ENCODE measurements at regions of chr5 and their contacts with region 1.

Region 1: GRCh38 chr5:111183064-111183463 is 41.1 kb upstream of the CAMK4 start:
- DNase-seq: no peak
- ATAC-seq: no peak
- H3K4me3 ChIP-seq: no peak overlapping the region
- H3K27ac ChIP-seq: no peak overlapping the region
- H3K4me1 ChIP-seq: no peaks in the 10 kb centered on the region
- H3K27me3 ChIP-seq: no peaks in the 10 kb centered on the region
- CTCF ChIP-seq: no peak
- POLR2A ChIP-seq: no peak
- RAD21 ChIP-seq: no peak

Region 2: DNA sequence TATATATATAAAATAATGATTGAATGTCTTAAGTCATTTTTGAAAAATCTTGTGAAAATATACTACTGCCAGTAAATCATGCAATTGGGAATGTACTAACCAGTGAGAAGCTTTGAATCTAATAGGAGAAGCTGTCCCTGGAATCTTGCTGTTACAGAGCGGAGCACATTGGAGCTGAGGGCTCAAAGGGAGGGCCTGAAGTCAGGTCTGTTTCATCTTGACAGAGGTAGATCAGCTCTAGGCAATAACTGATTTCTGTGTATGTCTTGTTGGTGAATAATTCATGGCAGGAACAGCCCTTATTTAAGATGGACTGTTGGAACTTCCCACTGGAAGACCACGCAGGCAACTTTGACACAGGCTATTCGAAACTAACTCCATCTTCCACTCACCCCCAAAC is 58.6 kb after region 1 on chr5:
- CTCF ChIA-PET with region 1: no interaction called
- POLR2A ChIA-PET with region 1: no interaction called
- RAD21 ChIA-PET with region 1: no interaction called
- intact Hi-C with region 1: loop called (anchors 2 kb)
- DNase-seq: no peak
- ATAC-seq: no peak
- H3K4me3 ChIP-seq: no peak overlapping the region
- H3K27ac ChIP-seq: no peak overlapping the region
- H3K4me1 ChIP-seq: no peaks in the 10 kb centered on the region
- H3K27me3 ChIP-seq: peaks cover 4% of the 10 kb centered on the region
- CTCF ChIP-seq: no peak
- POLR2A ChIP-seq: no peak
- RAD21 ChIP-seq: no peak